MCF 10A (cell line): ENCODE measurements at regions of chr3 and their contacts with region 1.

Region 1: GRCh38 chr3:7897655-7898054 is 604.0 kb upstream of the LMCD1 start:
- DNase-seq: no peak
- H3K4me3 Mint-ChIP-seq: no peak overlapping the region
- H3K27ac Mint-ChIP-seq: no peak overlapping the region
- H3K4me1 Mint-ChIP-seq: no peaks in the 10 kb centered on the region
- H3K27me3 Mint-ChIP-seq: no peaks in the 10 kb centered on the region
- CTCF ChIP-seq: no peak

Region 2: GRCh38 chr3:7854721-7855120 is 42.9 kb before region 1 on chr3:
- CTCF ChIA-PET with region 1: no interaction called
- POLR2A ChIA-PET with region 1: no interaction called
- intact Hi-C with region 1: loop called (anchors 5 kb)
- DNase-seq: no peak
- H3K4me3 Mint-ChIP-seq: no peak overlapping the region
- H3K27ac Mint-ChIP-seq: no peak overlapping the region
- H3K4me1 Mint-ChIP-seq: no peaks in the 10 kb centered on the region
- H3K27me3 Mint-ChIP-seq: no peaks in the 10 kb centered on the region
- CTCF ChIP-seq: no peak

Region 3: GRCh38 chr3:7934362-7934761 is 36.7 kb after region 1 on chr3:
- CTCF ChIA-PET with region 1: no interaction called
- POLR2A ChIA-PET with region 1: no interaction called
- intact Hi-C with region 1: no loop called
- DNase-seq: no peak
- H3K4me3 Mint-ChIP-seq: no peak overlapping the region
- H3K27ac Mint-ChIP-seq: no peak overlapping the region
- H3K4me1 Mint-ChIP-seq: no peaks in the 10 kb centered on the region
- H3K27me3 Mint-ChIP-seq: no peaks in the 10 kb centered on the region
- CTCF ChIP-seq: no peak